Activated CD4-positive, alpha-beta T cell treated with anti-CD3 and anti-CD28 coated beads, Interleukin-2, amount 10 ng/mL, durations not matched to agents 24 days and 14 days (primary cell): ENCODE measurements at regions of chr22 and their contacts with region 1.

Region 1: GRCh38 chr22:32796865-32797573 is 4.5 kb upstream of the TIMP3 start:
- DNase-seq: peak; percentile 84
- H3K4me3 Mint-ChIP-seq: no peak overlapping the region
- H3K27ac Mint-ChIP-seq: no peak overlapping the region
- H3K4me1 Mint-ChIP-seq: peaks cover 5% of the 10 kb centered on the region
- H3K27me3 Mint-ChIP-seq: peaks cover 50% of the 10 kb centered on the region

Region 2: GRCh38 chr22:32528984-32529982 is 267.7 kb before region 1 on chr22:
- intact Hi-C with region 1: loop called (anchors 1 kb)
- DNase-seq: peak; percentile 85
- H3K4me3 Mint-ChIP-seq: no peak overlapping the region
- H3K27ac Mint-ChIP-seq: no peak overlapping the region
- H3K4me1 Mint-ChIP-seq: no peaks in the 10 kb centered on the region
- H3K27me3 Mint-ChIP-seq: peaks cover 2% of the 10 kb centered on the region

Region 3: DNA sequence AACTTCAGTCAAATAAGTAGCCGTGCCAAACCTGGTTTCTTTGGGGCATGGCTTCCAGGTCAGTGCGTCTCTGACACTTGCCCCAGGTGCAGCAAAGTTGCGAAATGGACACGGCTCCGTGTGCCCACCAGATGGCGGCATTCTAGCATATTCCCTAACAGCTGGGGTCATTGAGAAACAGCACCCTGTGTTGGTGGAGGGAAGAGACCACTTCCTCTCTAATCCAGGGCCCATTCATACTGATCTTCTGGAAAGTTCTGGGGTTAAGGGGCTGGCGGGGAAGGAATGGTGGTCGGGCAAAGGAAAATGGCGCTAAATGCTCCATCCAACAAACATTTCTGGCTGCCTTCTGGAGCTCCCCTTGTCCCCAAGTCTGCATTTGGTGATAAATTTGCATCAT is 136.7 kb before region 1 on chr22:
- intact Hi-C with region 1: loop called (anchors 1 kb)
- DNase-seq: peak; percentile 85
- H3K4me3 Mint-ChIP-seq: no peak overlapping the region
- H3K27ac Mint-ChIP-seq: no peak overlapping the region
- H3K4me1 Mint-ChIP-seq: no peaks in the 10 kb centered on the region
- H3K27me3 Mint-ChIP-seq: peaks cover 9% of the 10 kb centered on the region